ENCODE measurements at regions of chr17 and their contacts with region 1.

Region 1: DNA sequence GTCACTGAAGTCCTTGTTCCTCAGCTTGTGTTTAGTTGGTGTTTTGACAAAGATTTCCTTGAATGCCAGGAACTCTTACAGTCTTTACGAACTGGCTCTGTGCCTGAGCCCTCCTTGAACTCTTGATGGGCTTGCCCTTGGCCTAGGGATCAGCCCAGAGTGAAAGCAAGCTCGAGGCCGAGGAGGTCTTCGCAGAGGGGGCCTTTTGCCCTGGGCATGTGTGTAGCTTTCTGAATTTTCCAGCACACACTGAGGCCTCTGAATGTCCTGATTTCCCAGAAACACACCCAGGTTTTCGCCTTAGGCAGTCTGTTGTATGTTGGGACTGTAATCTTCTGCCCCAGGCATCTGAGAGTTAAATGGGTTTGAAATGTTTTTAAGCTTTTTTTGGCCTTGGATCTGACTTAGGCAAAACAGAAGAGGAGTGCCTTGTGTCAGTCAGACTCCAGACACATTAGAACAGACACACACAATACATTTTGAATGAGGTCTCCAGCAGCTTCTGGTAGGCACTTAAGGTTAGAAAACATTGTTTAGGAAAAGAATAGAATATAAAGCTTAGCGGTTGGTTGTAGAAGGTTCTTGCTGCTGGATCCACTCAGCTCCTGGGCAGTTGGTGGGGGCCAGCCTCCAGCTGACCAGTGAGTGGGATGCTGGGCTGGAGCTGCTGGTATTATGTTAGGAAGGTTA is 17.1 kb downstream of the FOXK2 start:
- DNase-seq: no peak
- H3K4me3 Mint-ChIP-seq: no peak overlapping the region
- H3K27ac Mint-ChIP-seq: peak overlapping the region; percentile 38
- H3K4me1 Mint-ChIP-seq: peaks cover 54% of the 10 kb centered on the region
- H3K27me3 Mint-ChIP-seq: no peaks in the 10 kb centered on the region

Region 2: GRCh38 chr17:82320956-82321927 is 215.4 kb before region 1 on chr17:
- CTCF ChIA-PET with region 1: no interaction called
- intact Hi-C with region 1: no loop called
- DNase-seq: peak; percentile 93
- H3K4me3 Mint-ChIP-seq: peak overlapping the region; percentile 79
- H3K27ac Mint-ChIP-seq: peak overlapping the region; percentile 97
- H3K4me1 Mint-ChIP-seq: peaks cover 42% of the 10 kb centered on the region
- H3K27me3 Mint-ChIP-seq: no peaks in the 10 kb centered on the region

Region 3: GRCh38 chr17:82551779-82552457 is 15.3 kb after region 1 on chr17:
- CTCF ChIA-PET with region 1: interaction called, 19 read pairs
- intact Hi-C with region 1: no loop called
- DNase-seq: peak; percentile 90
- H3K4me3 Mint-ChIP-seq: no peak overlapping the region
- H3K27ac Mint-ChIP-seq: peak overlapping the region; percentile 54
- H3K4me1 Mint-ChIP-seq: peaks cover 32% of the 10 kb centered on the region
- H3K27me3 Mint-ChIP-seq: no peaks in the 10 kb centered on the region

Measured in activated naive CD4-positive, alpha-beta T cell treated with anti-CD3 and anti-CD28 coated beads for 36 hours (primary cell).